GM12878 (cell line): ENCODE measurements at regions of chr12 and their contacts with region 1.

Region 1: GRCh38 chr12:11581179-11581755 is 68.2 kb upstream of the ETV6 start:
- DNase-seq: no peak
- ATAC-seq: no peak
- H3K4me3 ChIP-seq: no peak overlapping the region
- H3K27ac ChIP-seq: peak overlapping the region; percentile 48; the same call in 1 of the 2 replicates
- H3K4me1 ChIP-seq: peaks cover 38% of the 10 kb centered on the region
- H3K27me3 ChIP-seq: no peaks in the 10 kb centered on the region
- CTCF ChIP-seq: peak; percentile 34 to 58 (median 37); a peak in 3 of 6 replicates
- EP300 ChIP-seq: no peak
- POLR2A ChIP-seq: no peak
- RAD21 ChIP-seq: peak; percentile 91

Region 2: GRCh38 chr12:11310336-11310735 is 270.9 kb before region 1 on chr12 and contains the start of gene PRB4:
- CTCF ChIA-PET with region 1: no interaction called
- POLR2A ChIA-PET with region 1: no interaction called
- RAD21 ChIA-PET with region 1: no interaction called
- SMC1A ChIA-PET with region 1: no interaction called
- in situ Hi-C with region 1: no loop called
- intact Hi-C with region 1: no loop called
- DNase-seq: no peak
- ATAC-seq: no peak
- H3K4me3 ChIP-seq: no peak within 1 kb of the TSS
- H3K27ac ChIP-seq: no peak within 1 kb of the TSS
- H3K4me1 ChIP-seq: no peaks in the 10 kb centered on the region
- H3K27me3 ChIP-seq: no peaks in the 10 kb centered on the region
- CTCF ChIP-seq: no peak
- EP300 ChIP-seq: no peak
- POLR2A ChIP-seq: no peak
- RAD21 ChIP-seq: no peak
- polyA plus RNA-seq, gene PRB4: not detected

Region 3: DNA sequence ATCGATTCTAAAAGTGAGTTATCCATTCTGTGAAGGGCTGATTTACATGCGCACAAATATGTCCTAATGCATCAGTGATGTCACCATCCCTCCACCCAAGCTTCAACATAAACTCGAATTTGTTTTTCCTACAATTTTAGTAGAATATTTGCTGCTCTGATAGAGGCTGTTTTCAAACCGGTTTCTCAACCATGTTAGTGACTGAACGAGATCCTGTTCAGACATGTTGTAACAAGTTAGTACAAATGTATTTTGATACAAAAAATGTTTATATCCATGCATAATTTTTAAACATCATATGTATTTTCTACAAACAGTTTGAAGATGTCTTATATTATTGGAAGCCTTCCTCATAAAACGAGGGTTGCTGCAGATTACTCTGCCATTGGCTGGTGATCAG is 173.2 kb before region 1 on chr12:
- CTCF ChIA-PET with region 1: no interaction called
- POLR2A ChIA-PET with region 1: no interaction called
- RAD21 ChIA-PET with region 1: no interaction called
- SMC1A ChIA-PET with region 1: no interaction called
- in situ Hi-C with region 1: no loop called
- intact Hi-C with region 1: no loop called
- DNase-seq: no peak
- ATAC-seq: no peak
- H3K4me3 ChIP-seq: no peak overlapping the region
- H3K27ac ChIP-seq: no peak overlapping the region
- H3K4me1 ChIP-seq: no peaks in the 10 kb centered on the region
- H3K27me3 ChIP-seq: no peaks in the 10 kb centered on the region; a peak in 1 of 4 replicates
- CTCF ChIP-seq: no peak
- EP300 ChIP-seq: no peak
- POLR2A ChIP-seq: no peak
- RAD21 ChIP-seq: no peak

Region 4: DNA sequence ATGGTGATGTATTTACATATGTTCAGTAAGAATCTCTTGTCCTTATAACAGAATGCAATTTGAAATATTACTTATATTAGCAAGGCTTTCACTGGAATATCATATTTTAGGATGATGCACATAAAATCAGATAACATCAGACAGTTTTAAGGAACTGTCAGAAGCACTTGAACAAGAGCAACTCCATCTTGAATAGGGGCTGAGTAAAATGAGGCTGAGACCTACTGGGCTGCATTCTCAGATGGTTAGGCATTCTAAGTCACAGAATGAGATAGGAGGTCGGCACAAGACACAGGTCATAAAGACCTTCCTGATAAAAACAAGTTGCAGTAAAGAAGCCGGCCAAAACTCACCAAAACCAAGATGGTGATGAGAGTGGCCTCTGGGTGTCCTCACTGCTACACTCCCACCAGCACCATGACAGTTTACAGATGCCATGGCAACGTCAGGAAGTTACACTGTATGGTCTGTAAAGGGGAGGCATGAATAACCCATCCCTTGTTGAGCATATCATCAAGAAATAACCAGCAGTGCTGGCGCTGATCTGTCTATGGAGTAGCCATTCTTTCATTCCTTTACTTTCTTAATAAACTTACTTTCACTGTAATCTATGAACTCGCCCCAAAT is 40.6 kb after region 1 on chr12:
- CTCF ChIA-PET with region 1: interaction called, 36 read pairs
- POLR2A ChIA-PET with region 1: no interaction called
- RAD21 ChIA-PET with region 1: interaction called, 19 read pairs
- SMC1A ChIA-PET with region 1: interaction called, 63 read pairs
- in situ Hi-C with region 1: no loop called
- intact Hi-C with region 1: no loop called
- DNase-seq: no peak
- ATAC-seq: peak; percentile 64
- H3K4me3 ChIP-seq: no peak overlapping the region
- H3K27ac ChIP-seq: no peak overlapping the region
- H3K4me1 ChIP-seq: no peaks in the 10 kb centered on the region
- H3K27me3 ChIP-seq: no peaks in the 10 kb centered on the region
- CTCF ChIP-seq: peak in 1 of 3 experiments; percentile 8; a peak in 2 of 6 replicates
- EP300 ChIP-seq: no peak
- POLR2A ChIP-seq: no peak
- RAD21 ChIP-seq: peak; percentile 41; the same call in 1 of the 2 replicates

Region 5: GRCh38 chr12:11746024-11746771 is 164.9 kb after region 1 on chr12:
- CTCF ChIA-PET with region 1: interaction called, 4 read pairs
- POLR2A ChIA-PET with region 1: no interaction called
- RAD21 ChIA-PET with region 1: interaction called, 15 read pairs
- SMC1A ChIA-PET with region 1: interaction called, 9 read pairs
- in situ Hi-C with region 1: no loop called
- intact Hi-C with region 1: no loop called
- DNase-seq: peak; percentile 93
- ATAC-seq: peak; percentile 57
- H3K4me3 ChIP-seq: peak overlapping the region; percentile 17; the same call in 1 of the 2 replicates
- H3K27ac ChIP-seq: peak overlapping the region; percentile 100
- H3K4me1 ChIP-seq: peaks cover 88% of the 10 kb centered on the region
- H3K27me3 ChIP-seq: no peaks in the 10 kb centered on the region
- CTCF ChIP-seq: no peak
- EP300 ChIP-seq: peak; percentile 91 to 94
- POLR2A ChIP-seq: peak; percentile 46; the same call in 1 of the 2 replicates
- RAD21 ChIP-seq: peak; percentile 12; the same call in 1 of the 2 replicates

Region 6: DNA sequence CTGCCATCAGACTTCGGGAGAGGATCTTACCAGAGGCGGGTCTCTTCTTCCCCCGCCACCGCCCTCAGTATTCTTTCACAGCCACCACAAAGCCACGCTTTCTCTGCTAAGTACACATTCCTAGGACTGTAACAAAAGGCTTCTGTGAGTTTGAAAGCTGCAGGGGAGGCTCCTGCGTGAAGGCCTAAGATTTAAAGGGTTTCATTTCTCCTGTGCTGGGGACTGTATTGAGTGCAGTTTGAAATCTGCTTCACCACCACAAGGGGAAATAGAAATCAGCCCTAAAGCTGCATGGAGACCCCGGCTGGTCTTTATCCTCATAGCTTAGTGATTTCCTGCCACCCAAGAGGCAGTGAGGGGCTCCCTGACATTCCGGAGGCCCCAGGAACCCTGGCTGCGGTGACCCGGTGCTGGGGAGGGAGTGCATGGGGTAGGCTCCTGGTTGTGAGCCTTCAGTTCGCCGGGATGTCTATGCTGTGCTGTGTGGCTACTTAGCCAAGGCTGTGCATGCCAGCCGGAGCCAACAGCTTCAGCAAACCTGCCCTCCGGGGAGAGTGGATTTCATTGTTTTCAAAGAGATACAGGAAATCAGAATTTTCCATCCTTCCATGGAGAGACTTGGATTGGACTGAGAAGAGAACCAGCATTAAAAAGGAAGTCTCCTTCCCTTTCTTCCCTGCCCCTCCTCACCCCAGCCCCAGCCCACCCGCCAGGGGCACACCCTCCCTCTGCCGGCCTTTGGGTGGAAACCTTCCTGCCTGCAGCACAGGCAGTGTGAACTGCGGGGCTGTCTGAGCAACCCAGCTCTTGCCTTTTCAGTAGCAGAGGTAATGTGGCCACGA is 231.5 kb after region 1 on chr12:
- CTCF ChIA-PET with region 1: interaction called, 12 read pairs
- POLR2A ChIA-PET with region 1: no interaction called
- RAD21 ChIA-PET with region 1: interaction called, 4 read pairs
- SMC1A ChIA-PET with region 1: interaction called, 4 read pairs
- in situ Hi-C with region 1: no loop called
- intact Hi-C with region 1: no loop called
- DNase-seq: no peak
- ATAC-seq: peak; percentile 89
- H3K4me3 ChIP-seq: peak overlapping the region; percentile 61
- H3K27ac ChIP-seq: peak overlapping the region; percentile 93
- H3K4me1 ChIP-seq: peaks cover 41% of the 10 kb centered on the region
- H3K27me3 ChIP-seq: no peaks in the 10 kb centered on the region
- CTCF ChIP-seq: peak; percentile 19 to 38 (median 20); a peak in 4 of 6 replicates
- EP300 ChIP-seq: no peak
- POLR2A ChIP-seq: peak; percentile 40; the same call in 1 of the 2 replicates
- RAD21 ChIP-seq: peak; percentile 34; the same call in 1 of the 2 replicates

Region 7: DNA sequence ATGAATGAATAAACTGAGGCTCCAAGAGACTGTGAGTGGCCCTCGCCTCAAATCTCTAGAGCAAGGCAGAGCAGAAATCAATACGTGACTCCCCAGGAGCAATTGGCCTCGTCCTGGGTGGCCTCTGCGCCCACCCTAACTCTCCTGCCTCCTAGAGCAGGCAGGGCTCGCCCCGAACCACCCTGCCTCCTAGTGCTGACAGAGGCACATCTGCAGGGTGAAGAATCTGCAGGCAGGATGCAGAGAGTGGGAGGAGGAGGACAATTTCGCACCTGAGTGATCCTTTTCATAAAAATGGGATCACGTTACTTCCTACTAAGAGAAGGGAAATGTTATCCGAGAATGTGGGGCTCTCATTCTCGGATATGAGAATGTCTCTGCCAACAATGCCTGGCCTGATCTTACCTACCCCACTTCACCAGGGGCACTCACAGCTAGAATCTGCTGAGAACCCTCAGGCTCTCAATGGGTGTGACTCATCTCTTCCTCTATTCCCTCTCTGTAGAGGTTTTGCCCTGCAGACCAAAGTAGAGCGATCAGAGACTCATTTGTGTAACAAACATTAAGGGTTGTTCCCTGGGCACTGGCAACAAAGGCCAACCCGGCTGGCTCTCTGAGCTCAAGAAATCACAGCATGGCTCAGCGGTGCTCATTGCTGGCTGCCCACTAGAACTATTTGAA is 427.8 kb after region 1 on chr12:
- CTCF ChIA-PET with region 1: interaction called, 40 read pairs
- POLR2A ChIA-PET with region 1: no interaction called
- RAD21 ChIA-PET with region 1: interaction called, 33 read pairs
- SMC1A ChIA-PET with region 1: interaction called, 47 read pairs
- in situ Hi-C with region 1: no loop called
- intact Hi-C with region 1: no loop called
- DNase-seq: peak; percentile 86
- ATAC-seq: peak; percentile 63
- H3K4me3 ChIP-seq: no peak overlapping the region
- H3K27ac ChIP-seq: peak overlapping the region; percentile 90
- H3K4me1 ChIP-seq: peaks cover 57% of the 10 kb centered on the region
- H3K27me3 ChIP-seq: no peaks in the 10 kb centered on the region
- CTCF ChIP-seq: peak; percentile 33 to 45 (median 41); a peak in 5 of 6 replicates
- EP300 ChIP-seq: no peak; a peak in 1 of 4 replicates
- POLR2A ChIP-seq: no peak
- RAD21 ChIP-seq: peak; percentile 71

Region 8: GRCh38 chr12:12123036-12123604 is 541.9 kb after region 1 on chr12:
- CTCF ChIA-PET with region 1: no interaction called
- POLR2A ChIA-PET with region 1: no interaction called
- RAD21 ChIA-PET with region 1: no interaction called
- SMC1A ChIA-PET with region 1: no interaction called
- in situ Hi-C with region 1: no loop called
- intact Hi-C with region 1: no loop called
- DNase-seq: no peak
- ATAC-seq: no peak
- H3K4me3 ChIP-seq: no peak overlapping the region
- H3K27ac ChIP-seq: no peak overlapping the region
- H3K4me1 ChIP-seq: no peaks in the 10 kb centered on the region
- H3K27me3 ChIP-seq: no peaks in the 10 kb centered on the region
- CTCF ChIP-seq: no peak
- EP300 ChIP-seq: no peak
- POLR2A ChIP-seq: no peak
- RAD21 ChIP-seq: no peak

Region 9: GRCh38 chr12:12327802-12328201 is 746.5 kb after region 1 on chr12:
- CTCF ChIA-PET with region 1: interaction called, 38 read pairs
- POLR2A ChIA-PET with region 1: no interaction called
- RAD21 ChIA-PET with region 1: interaction called, 10 read pairs
- SMC1A ChIA-PET with region 1: interaction called, 5 read pairs
- in situ Hi-C with region 1: loop called (anchors 10 kb)
- intact Hi-C with region 1: no loop called
- DNase-seq: peak; percentile 25
- ATAC-seq: peak; percentile 74
- H3K4me3 ChIP-seq: no peak overlapping the region
- H3K27ac ChIP-seq: no peak overlapping the region
- H3K4me1 ChIP-seq: no peaks in the 10 kb centered on the region
- H3K27me3 ChIP-seq: no peaks in the 10 kb centered on the region
- CTCF ChIP-seq: peak; percentile 56 to 76 (median 74); a peak in 5 of 6 replicates
- EP300 ChIP-seq: no peak
- POLR2A ChIP-seq: no peak
- RAD21 ChIP-seq: peak; percentile 85